Activated T-helper 2 cell treated with anti-CD3 and anti-CD28 coated beads, Interferon-gamma antibody, Interleukin-2, Interleukin-4, amounts not matched to agents 10 μg/mL and 5 μg/mL and 100 μg/mL, durations not matched to agents 14 hours and 24 hours and 36 hours (primary cell): ENCODE measurements at regions of chr4 and their contacts with region 1.

Region 1: DNA sequence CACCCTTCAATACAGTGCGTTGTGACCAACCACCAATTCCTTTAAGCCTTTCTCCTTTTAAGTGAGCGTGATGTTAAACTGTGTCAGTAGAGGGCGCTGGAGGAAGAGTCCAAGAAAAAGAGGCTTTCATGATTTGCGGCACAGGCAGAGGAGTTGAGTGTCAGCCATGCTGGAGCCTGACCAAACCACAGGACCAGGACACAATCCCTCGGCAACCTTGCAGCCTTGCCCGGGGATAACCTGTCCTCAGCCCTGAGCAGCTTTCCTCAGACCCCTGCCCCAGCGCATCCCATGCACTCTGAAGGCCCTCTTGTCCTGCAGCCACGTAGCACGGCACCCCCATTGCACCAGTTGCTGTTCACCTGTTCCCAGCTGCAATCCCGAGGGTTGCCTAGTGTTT is 53.5 kb upstream of the SMIM31 start:
- DNase-seq: no peak
- H3K4me3 Mint-ChIP-seq: no peak overlapping the region
- H3K27ac Mint-ChIP-seq: no peak overlapping the region
- H3K4me1 Mint-ChIP-seq: peaks cover 5% of the 10 kb centered on the region
- H3K27me3 Mint-ChIP-seq: no peaks in the 10 kb centered on the region

Region 2: GRCh38 chr4:164731827-164732474 is 31.5 kb after region 1 on chr4:
- intact Hi-C with region 1: loop called (anchors 1 kb)
- DNase-seq: peak; percentile 15
- H3K4me3 Mint-ChIP-seq: no peak overlapping the region
- H3K27ac Mint-ChIP-seq: no peak overlapping the region
- H3K4me1 Mint-ChIP-seq: no peaks in the 10 kb centered on the region
- H3K27me3 Mint-ChIP-seq: peaks cover 11% of the 10 kb centered on the region